ENCODE measurements at regions of chr10 and their contacts with region 1.

Region 1: DNA sequence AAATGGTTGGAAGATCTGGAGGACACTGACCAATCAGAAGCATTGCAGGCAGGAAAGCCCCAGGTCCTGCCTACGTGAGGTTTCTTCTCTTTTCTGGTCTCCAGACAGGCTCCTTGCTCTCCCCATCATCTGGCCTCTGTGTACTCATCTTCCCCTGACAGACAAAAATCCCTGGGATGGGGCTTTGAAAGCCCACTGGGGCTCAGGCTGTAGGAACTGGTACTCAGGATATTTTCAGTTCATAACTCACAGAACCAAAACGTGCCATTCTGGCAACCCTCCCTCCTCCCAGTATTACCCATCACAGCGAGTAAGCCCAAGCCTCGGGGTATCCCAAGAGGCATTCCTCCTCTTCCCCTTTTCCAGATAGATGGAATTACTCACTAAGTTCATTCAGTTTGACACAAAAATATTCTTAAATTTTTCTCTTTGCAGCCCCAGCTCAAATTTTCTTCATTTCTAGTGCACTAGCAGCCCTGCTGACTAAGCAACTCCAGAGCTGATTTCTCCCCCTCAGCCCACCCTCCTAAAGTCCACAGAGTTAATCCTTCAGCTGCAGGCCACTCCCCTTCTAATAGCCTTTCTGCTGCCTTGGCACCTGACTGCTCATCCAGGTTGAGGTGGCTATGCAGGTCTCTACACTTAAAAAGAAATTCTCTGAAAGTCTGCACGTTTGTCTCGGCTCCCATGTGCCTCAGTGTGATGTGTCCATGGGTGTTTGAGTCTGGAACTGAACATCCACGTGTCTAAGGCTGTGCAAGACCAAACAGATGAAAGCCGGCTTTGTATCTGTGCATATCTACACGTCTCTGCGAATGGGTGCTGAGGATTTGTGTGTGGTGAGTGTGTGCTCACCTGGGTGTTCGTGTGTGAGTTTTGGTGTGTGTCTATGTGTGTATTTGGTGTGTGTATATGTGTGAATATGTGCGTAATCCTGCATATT is 331.4 kb downstream of the CCSER2 start:
- DNase-seq: no peak
- H3K4me3 ChIP-seq: no peak overlapping the region
- H3K4me3 Mint-ChIP-seq: no peak overlapping the region
- H3K27ac ChIP-seq: no peak overlapping the region
- H3K27ac Mint-ChIP-seq: no peak overlapping the region
- H3K4me1 ChIP-seq: no peaks in the 10 kb centered on the region
- H3K4me1 Mint-ChIP-seq: no peaks in the 10 kb centered on the region
- H3K27me3 ChIP-seq: no peaks in the 10 kb centered on the region
- H3K27me3 Mint-ChIP-seq: peaks cover 0 to 3% of the 10 kb centered on the region in 2 donors

Region 2: DNA sequence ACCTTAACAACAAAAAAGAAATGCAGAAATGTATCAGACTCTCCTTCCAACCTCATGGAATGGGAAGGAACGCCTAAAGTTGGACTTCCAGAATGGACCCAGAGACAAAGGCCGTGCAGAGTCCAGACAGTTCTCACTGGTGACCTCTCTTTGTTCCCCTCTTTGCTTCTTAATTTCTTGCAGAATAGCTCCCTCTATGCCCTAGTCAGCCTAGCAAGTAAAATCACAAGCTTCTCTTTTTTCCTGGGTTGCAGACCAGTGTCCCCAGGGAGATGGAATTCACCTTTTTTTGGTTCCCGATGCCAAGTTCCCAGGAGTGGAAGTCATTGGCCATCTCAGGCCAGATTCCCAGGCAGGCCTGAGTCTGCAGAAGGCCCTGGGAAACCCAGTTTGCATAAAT is 53.3 kb before region 1 on chr10:
- CTCF ChIA-PET with region 1: no interaction called
- POLR2A ChIA-PET with region 1: no interaction called
- intact Hi-C with region 1: loop called (anchors 2 kb)
- DNase-seq: no peak
- H3K4me3 ChIP-seq: no peak overlapping the region
- H3K4me3 Mint-ChIP-seq: no peak overlapping the region
- H3K27ac ChIP-seq: no peak overlapping the region
- H3K27ac Mint-ChIP-seq: no peak overlapping the region
- H3K4me1 ChIP-seq: no peaks in the 10 kb centered on the region
- H3K4me1 Mint-ChIP-seq: no peaks in the 10 kb centered on the region
- H3K27me3 ChIP-seq: no peaks in the 10 kb centered on the region
- H3K27me3 Mint-ChIP-seq: peaks cover 6 to 16% of the 10 kb centered on the region in 2 donors

Region 3: GRCh38 chr10:84766923-84767322 is 107.2 kb after region 1 on chr10:
- CTCF ChIA-PET with region 1: no interaction called
- POLR2A ChIA-PET with region 1: no interaction called
- intact Hi-C with region 1: no loop called
- DNase-seq: no peak
- H3K4me3 ChIP-seq: no peak overlapping the region
- H3K4me3 Mint-ChIP-seq: no peak overlapping the region
- H3K27ac ChIP-seq: no peak overlapping the region
- H3K27ac Mint-ChIP-seq: no peak overlapping the region
- H3K4me1 ChIP-seq: no peaks in the 10 kb centered on the region
- H3K4me1 Mint-ChIP-seq: no peaks in the 10 kb centered on the region
- H3K27me3 ChIP-seq: no peaks in the 10 kb centered on the region
- H3K27me3 Mint-ChIP-seq: peaks cover 0 to 6% of the 10 kb centered on the region in 2 donors